ENCODE measurements at regions of chr12 and their contacts with region 1.

Region 1: GRCh38 chr12:95513599-95513998 is 37.7 kb downstream of the USP44 start:
- DNase-seq: no peak
- H3K4me3 ChIP-seq: no peak overlapping the region
- H3K27ac ChIP-seq: no peak overlapping the region
- H3K4me1 ChIP-seq: no peaks in the 10 kb centered on the region
- H3K27me3 ChIP-seq: no peaks in the 10 kb centered on the region
- CTCF ChIP-seq: no peak

Region 2: GRCh38 chr12:95117178-95117599 is 396.4 kb before region 1 on chr12:
- CTCF ChIA-PET with region 1: no interaction called
- dilution Hi-C with region 1: no loop called
- in situ Hi-C with region 1: no loop called
- intact Hi-C with region 1: no loop called
- DNase-seq: no peak
- H3K4me3 ChIP-seq: peak overlapping the region in 1 of 3 experiments; percentile 56
- H3K27ac ChIP-seq: peak overlapping the region; percentile 99
- H3K4me1 ChIP-seq: peaks cover 44% of the 10 kb centered on the region
- H3K27me3 ChIP-seq: no peaks in the 10 kb centered on the region
- CTCF ChIP-seq: peak; percentile 67 to 71

Region 3: DNA sequence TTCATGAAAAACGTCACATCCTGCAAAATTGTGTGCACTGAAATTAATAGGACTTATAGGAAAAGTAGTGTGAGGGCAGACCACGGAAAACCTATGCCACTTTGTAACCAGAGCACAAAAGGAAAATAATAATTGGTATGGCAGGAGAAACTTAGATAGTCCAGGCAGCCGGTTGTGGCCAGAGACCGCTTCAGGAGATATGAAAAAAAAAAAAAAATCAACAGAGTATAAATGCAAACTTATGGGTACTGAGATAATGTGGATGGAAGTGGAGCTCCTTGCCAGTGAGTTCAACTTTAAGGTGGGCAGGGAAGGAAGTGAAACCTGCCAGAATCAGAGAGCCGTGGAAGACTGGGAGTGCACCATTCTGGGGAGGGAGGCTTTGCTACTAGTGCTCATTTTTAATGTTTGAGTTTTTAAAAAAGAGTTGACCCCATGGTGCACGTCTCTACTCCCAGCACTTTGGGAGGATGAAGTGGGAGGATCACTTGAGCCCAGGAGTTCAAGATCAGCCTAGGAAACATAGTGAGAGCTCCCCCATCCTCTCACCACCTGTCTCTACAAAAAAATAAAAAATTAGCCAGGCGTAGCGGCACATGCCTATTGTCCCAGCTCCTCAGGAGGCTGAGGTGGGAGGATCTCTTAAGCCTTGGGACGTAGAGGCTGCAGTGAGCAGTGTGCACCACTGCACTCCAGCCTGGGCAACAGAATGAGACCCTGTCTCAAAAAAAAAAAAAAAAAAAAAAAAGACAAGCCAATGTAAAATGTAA is 74.0 kb before region 1 on chr12:
- CTCF ChIA-PET with region 1: interaction called, 23 read pairs
- dilution Hi-C with region 1: no loop called
- in situ Hi-C with region 1: no loop called
- intact Hi-C with region 1: no loop called
- DNase-seq: no peak
- H3K4me3 ChIP-seq: no peak overlapping the region
- H3K27ac ChIP-seq: no peak overlapping the region
- H3K4me1 ChIP-seq: no peaks in the 10 kb centered on the region
- H3K27me3 ChIP-seq: no peaks in the 10 kb centered on the region
- CTCF ChIP-seq: no peak

Region 4: GRCh38 chr12:95611676-95612309 is 98.2 kb after region 1 on chr12:
- CTCF ChIA-PET with region 1: no interaction called
- dilution Hi-C with region 1: no loop called
- in situ Hi-C with region 1: no loop called
- intact Hi-C with region 1: no loop called
- DNase-seq: no peak
- H3K4me3 ChIP-seq: no peak overlapping the region
- H3K27ac ChIP-seq: no peak overlapping the region
- H3K4me1 ChIP-seq: peaks cover 15% of the 10 kb centered on the region
- H3K27me3 ChIP-seq: no peaks in the 10 kb centered on the region
- CTCF ChIP-seq: no peak

Region 5: DNA sequence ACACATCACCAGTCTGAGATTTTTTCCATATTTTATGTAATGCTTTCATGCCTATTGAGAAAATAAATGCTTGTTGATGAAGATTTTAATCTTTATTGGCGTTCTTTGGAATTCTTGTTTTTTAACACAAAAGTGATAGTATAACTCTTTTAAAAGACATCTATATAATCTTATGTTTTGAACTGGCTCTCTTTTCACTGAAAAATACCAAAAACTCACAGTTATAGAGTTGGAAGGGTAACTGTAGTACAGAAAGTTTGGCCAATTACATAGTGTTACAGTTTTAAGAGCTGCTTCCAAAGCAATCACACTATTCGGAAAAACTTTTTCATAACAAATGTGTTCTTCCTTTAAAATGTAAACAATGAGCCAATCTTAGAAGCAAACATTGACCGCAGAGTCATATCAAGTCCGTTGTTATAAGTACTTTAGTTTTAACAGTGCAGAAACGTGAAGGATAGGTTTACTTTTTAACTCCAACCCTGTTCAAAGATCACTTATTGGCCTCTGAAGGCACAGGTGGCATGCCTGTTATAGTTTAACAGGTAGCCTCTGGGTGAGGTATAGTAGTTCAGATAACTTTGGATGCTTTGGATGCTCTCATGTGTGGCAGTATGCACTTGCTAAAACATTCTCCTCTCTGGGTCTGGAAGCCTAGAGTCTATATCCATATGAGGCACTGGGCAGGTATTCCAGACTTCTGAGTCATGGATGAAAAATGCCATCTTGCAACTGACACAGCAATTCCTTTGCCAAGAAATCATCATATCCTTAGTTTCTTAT is 289.1 kb after region 1 on chr12:
- CTCF ChIA-PET with region 1: no interaction called
- dilution Hi-C with region 1: no loop called
- in situ Hi-C with region 1: no loop called
- intact Hi-C with region 1: no loop called
- DNase-seq: peak; percentile 88
- H3K4me3 ChIP-seq: no peak overlapping the region
- H3K27ac ChIP-seq: peak overlapping the region; percentile 88
- H3K4me1 ChIP-seq: peaks cover 31% of the 10 kb centered on the region
- H3K27me3 ChIP-seq: no peaks in the 10 kb centered on the region
- CTCF ChIP-seq: no peak

Region 6: DNA sequence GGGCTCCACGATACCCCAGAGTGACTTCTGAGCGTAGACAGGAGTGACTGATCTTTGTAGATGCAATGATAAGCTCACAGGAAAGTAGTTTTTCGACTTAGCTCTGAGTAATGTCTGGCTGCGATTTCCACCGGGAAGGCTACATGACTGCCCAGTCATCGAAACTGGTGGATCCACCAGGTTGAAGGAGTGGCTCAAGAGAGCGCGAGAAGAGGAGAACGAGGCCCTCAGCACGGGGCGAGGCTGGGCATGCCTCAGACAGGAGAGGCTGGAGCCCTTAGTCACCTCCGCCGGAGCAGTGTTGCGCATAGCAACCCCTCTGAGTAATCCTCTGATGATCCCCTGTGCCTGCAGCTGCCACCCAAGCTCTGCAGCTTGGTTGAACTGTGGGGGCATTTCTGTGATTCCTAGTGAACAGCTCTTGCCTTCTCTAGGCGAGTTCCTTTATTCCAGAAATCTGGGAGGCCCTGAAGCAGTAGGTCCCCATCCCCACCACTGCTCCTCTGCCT is 706.2 kb after region 1 on chr12:
- CTCF ChIA-PET with region 1: no interaction called
- dilution Hi-C with region 1: no loop called
- in situ Hi-C with region 1: no loop called
- intact Hi-C with region 1: no loop called
- DNase-seq: peak; percentile 100
- H3K4me3 ChIP-seq: peak overlapping the region; percentile 30 to 41 (median 38)
- H3K27ac ChIP-seq: peak overlapping the region; percentile 100
- H3K4me1 ChIP-seq: peaks cover 57% of the 10 kb centered on the region
- H3K27me3 ChIP-seq: no peaks in the 10 kb centered on the region
- CTCF ChIP-seq: no peak

Measured in mammary epithelial cell (primary cell).